Activated naive CD4-positive, alpha-beta T cell treated with anti-CD3 and anti-CD28 coated beads for 36 hours (primary cell): ENCODE measurements at regions of chr20 and their contacts with region 1.

Region 1: DNA sequence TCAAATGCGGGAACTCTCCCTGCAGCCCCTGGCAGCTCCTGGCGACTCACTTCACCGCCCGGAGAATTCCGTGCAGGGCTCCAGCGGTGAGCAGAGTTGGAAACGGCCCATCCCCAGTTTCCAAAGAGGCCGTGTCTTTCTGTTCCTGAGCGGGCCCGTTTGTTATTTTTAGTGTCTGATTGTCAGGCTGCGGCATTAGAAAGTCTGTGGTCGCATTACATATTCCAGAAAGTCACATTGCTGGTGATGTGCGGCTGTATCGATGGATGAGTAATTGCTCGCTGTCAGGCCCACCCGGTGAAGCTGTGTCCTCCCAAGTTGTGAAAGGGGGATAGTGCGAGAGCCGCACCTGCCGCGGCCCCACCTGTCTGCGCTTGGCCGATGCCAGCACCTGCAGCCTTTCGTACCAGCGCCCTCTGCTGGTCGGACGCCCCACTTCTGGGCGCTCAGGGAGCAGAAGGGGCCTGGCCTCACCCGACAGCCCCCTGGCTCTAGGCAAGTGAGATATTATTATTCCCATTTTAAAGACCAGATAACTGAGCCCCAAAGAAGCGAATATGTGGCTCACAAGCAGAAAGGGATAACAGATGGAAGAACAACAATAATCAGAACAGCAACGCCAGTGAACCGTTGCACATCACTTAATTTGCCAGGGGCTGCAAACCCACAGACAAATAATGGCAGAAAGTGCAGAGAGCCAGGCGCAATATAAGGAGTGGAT is 244.9 kb downstream of the TSHZ2 start:
- DNase-seq: peak; percentile 88
- H3K4me3 Mint-ChIP-seq: peak overlapping the region; percentile 38
- H3K27ac Mint-ChIP-seq: peak overlapping the region; percentile 88
- H3K4me1 Mint-ChIP-seq: peaks cover 55% of the 10 kb centered on the region
- H3K27me3 Mint-ChIP-seq: no peaks in the 10 kb centered on the region

Region 2: DNA sequence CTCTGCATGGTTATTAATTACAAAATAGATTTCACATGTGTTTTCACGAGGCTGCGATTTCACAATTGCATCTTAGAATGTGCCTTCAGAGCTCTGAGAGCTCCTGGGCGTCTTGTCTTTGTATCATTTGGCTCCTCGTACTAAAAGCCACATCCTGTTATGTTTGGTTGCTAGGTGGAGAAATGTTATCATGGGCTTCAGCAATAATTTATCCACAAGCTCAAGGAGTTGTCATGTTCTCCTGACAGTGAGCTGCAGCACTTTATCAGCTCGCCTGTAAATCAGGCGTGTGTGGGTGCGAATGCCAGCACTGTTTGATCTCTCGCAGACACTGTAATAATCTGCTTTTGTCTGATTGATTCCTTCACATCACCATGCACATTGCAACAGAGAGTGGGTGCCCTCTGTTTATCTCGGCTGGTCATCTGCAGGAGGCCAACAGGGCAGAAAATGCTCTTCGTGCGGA is 806.8 kb before region 1 on chr20:
- CTCF ChIA-PET with region 1: no interaction called
- intact Hi-C with region 1: loop called (anchors 10 kb)
- DNase-seq: peak; percentile 54
- H3K4me3 Mint-ChIP-seq: peak overlapping the region; percentile 20
- H3K27ac Mint-ChIP-seq: peak overlapping the region; percentile 17
- H3K4me1 Mint-ChIP-seq: peaks cover 66% of the 10 kb centered on the region
- H3K27me3 Mint-ChIP-seq: no peaks in the 10 kb centered on the region

Region 3: GRCh38 chr20:52747845-52748284 is 469.2 kb before region 1 on chr20:
- CTCF ChIA-PET with region 1: interaction called, 3 read pairs
- intact Hi-C with region 1: loop called (anchors 5 kb)
- DNase-seq: no peak
- H3K4me3 Mint-ChIP-seq: no peak overlapping the region
- H3K27ac Mint-ChIP-seq: no peak overlapping the region
- H3K4me1 Mint-ChIP-seq: no peaks in the 10 kb centered on the region
- H3K27me3 Mint-ChIP-seq: peaks cover under 1% of the 10 kb centered on the region

Region 4: DNA sequence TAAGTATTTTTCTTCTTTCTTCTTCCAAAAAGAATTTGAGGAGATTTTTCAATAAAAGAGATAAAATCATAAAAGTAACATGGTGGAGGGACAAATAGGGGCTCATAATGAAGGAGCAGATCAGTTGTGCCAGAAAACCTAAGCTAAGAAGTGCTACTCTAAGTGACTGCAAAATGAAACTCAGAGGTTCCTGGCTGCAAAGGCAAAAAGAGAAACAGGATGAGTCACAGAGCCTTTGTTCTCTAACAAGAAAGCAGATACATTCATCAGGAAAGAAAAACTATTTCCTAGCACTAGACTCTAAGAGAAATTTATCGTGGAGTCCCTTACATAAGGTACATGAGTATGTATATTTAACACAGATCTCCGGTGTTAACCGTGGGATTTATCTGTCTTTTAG is 195.1 kb before region 1 on chr20:
- CTCF ChIA-PET with region 1: no interaction called
- intact Hi-C with region 1: loop called (anchors 2 kb)
- DNase-seq: peak; percentile 64
- H3K4me3 Mint-ChIP-seq: peak overlapping the region; percentile 29
- H3K27ac Mint-ChIP-seq: peak overlapping the region; percentile 93
- H3K4me1 Mint-ChIP-seq: peaks cover 85% of the 10 kb centered on the region
- H3K27me3 Mint-ChIP-seq: no peaks in the 10 kb centered on the region

Region 5: DNA sequence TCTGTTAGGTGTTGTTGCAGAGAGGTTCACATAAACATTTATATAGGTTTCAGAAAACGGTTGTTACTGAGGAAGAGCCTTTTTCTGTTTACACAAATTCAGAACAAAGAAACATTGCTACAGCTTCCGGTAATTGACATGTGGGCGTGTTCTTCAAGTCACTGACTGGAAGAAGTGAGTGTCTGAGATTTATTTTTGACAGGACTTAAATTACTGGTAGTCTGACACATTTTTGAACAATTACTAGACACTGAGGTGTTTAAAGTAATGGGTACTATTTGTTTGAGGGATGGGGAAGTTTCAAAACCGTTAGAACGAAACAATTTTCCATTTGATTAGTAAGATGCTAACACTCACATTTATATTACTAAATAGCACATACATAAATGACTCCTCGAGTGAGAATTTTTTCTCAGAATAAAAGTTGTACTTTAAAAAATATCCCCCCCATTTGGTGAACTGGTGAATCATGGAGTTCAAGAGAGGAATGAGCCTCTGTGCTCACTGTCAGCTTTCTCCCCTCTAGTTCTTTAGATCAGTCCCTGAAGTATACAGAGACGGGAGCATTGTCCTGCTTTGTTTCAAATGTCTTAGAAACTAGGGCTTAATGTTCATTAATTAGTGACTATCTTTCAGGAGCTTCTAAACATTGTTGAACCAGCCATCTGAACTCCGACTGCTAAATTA is 146.2 kb before region 1 on chr20:
- CTCF ChIA-PET with region 1: no interaction called
- intact Hi-C with region 1: loop called (anchors 1 kb)
- DNase-seq: peak; percentile 80
- H3K4me3 Mint-ChIP-seq: peak overlapping the region; percentile 18
- H3K27ac Mint-ChIP-seq: peak overlapping the region; percentile 98
- H3K4me1 Mint-ChIP-seq: peaks cover 63% of the 10 kb centered on the region
- H3K27me3 Mint-ChIP-seq: no peaks in the 10 kb centered on the region

Region 6: GRCh38 chr20:53149148-53149889 is 67.7 kb before region 1 on chr20:
- CTCF ChIA-PET with region 1: no interaction called
- intact Hi-C with region 1: loop called (anchors 1 kb)
- DNase-seq: no peak
- H3K4me3 Mint-ChIP-seq: peak overlapping the region; percentile 37
- H3K27ac Mint-ChIP-seq: peak overlapping the region; percentile 73
- H3K4me1 Mint-ChIP-seq: peaks cover 77% of the 10 kb centered on the region
- H3K27me3 Mint-ChIP-seq: no peaks in the 10 kb centered on the region

Region 7: GRCh38 chr20:53227523-53227922 is 10.5 kb after region 1 on chr20:
- CTCF ChIA-PET with region 1: no interaction called
- intact Hi-C with region 1: no loop called
- DNase-seq: no peak
- H3K4me3 Mint-ChIP-seq: no peak overlapping the region
- H3K27ac Mint-ChIP-seq: no peak overlapping the region
- H3K4me1 Mint-ChIP-seq: peaks cover 15% of the 10 kb centered on the region
- H3K27me3 Mint-ChIP-seq: no peaks in the 10 kb centered on the region

Region 8: DNA sequence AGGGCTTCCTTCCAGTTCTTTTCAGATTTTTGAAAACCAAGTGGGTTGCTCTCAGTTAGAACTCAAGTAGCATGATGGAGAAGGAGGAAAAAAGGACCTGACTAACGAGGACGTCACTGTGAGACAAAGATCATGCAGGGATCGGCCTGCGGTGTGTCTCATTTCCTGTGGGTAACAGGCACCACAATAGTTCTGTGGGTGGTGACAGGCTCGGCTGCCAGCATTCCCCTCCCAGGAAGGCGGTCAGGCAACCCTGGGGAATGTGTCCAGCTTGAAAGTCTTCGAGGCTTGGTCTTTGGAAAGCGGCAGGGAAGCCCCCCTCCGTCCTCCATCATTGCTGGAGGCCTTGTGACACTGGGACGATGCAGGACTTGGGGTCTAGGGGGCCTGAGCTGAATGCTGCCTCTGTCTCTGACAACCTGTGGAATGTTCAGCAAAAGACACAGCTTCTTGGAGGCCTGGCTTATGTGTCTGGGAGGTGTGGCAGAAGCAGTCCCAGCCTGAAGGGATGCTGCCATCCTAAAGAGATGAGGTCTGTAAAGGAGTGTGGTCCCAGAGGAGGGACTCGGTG is 732.4 kb after region 1 on chr20:
- CTCF ChIA-PET with region 1: no interaction called
- intact Hi-C with region 1: loop called (anchors 5 kb)
- DNase-seq: peak; percentile 91
- H3K4me3 Mint-ChIP-seq: peak overlapping the region; percentile 61
- H3K27ac Mint-ChIP-seq: peak overlapping the region; percentile 89
- H3K4me1 Mint-ChIP-seq: peaks cover 29% of the 10 kb centered on the region
- H3K27me3 Mint-ChIP-seq: no peaks in the 10 kb centered on the region